ENCODE measurements at regions of chr17 and their contacts with region 1.

Region 1: DNA sequence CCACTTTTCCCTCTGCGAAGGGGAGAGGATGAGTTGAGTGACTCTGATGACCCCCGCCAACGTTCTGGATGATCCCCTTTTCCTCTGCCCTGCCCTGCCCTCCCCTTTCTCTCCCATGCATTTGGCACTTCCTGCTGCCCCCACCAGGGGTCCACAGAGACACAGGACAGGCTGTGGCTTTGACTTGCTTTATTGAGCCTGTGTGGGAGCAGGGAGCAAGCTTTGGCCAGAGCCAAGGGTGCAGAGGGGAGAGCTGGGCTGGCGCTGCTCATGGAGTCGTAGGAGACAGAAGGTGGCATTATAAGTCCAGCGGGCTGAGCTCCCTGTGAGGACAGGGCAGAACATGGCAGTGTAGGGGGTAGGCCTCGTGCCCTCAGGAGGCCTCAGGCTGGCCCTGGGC is 1.6 kb downstream of the PPY start:
- DNase-seq: no peak
- ATAC-seq: peak in 6 of 8 donors; percentile 9 to 62 (median 34)
- H3K4me3 ChIP-seq: no peak overlapping the region
- H3K27ac ChIP-seq: no peak overlapping the region
- H3K4me1 ChIP-seq: peaks cover 0 to 15% (median 6%) of the 10 kb centered on the region in 9 donors
- H3K27me3 ChIP-seq: peaks cover 0 to 28% (median 23%) of the 10 kb centered on the region in 7 donors
- CTCF ChIP-seq: peak in 7 of 9 donors; percentile 32 to 52 (median 43)

Region 2: GRCh38 chr17:43994272-43995149 is 53.9 kb after region 1 on chr17:
- intact Hi-C with region 1: loop called (anchors 1 to 10 kb)
- DNase-seq: peak; percentile 54 to 69
- ATAC-seq: peak; percentile 83 to 93 (median 86)
- H3K4me3 ChIP-seq: peak overlapping the region in 9 of 10 donors; percentile 2 to 48 (median 35)
- H3K27ac ChIP-seq: no peak overlapping the region
- H3K4me1 ChIP-seq: peaks cover 0 to 10% (median 9%) of the 10 kb centered on the region in 9 donors
- H3K27me3 ChIP-seq: peaks cover 0 to 25% (median 4%) of the 10 kb centered on the region in 7 donors
- CTCF ChIP-seq: peak; percentile 68 to 90 (median 87)

Region 3: DNA sequence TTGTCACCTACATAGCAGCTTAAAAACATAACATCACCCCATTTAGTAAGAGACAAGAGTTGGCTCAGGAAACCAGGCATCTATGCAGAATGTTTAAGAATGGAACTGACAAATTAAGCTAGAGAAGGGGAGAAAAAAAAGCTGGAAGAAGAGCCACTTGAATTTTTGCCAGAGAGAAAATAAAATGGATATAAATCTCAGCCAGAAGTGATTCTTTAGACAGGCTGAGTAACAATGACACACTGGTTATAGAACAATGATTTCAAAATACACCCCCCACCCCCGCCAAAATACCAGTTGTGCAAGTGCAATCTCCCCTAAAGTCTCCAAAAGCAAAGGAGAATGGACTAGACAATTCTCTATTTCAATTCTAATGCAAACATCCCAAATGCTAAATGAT is 103.4 kb after region 1 on chr17:
- intact Hi-C with region 1: loop called in 7 of 10 experiments (anchors 1 to 10 kb)
- DNase-seq: no peak
- ATAC-seq: no peak
- H3K4me3 ChIP-seq: no peak overlapping the region
- H3K27ac ChIP-seq: peak overlapping the region in 5 of 10 donors; percentile 46 to 71 (median 53)
- H3K4me1 ChIP-seq: peaks cover 2 to 50% (median 34%) of the 10 kb centered on the region in 9 donors
- H3K27me3 ChIP-seq: no peaks in the 10 kb centered on the region
- CTCF ChIP-seq: no peak

Region 4: GRCh38 chr17:44110823-44111633 is 170.4 kb after region 1 on chr17:
- intact Hi-C with region 1: loop called in 1 of 10 experiments (anchors 10 kb)
- DNase-seq: peak; percentile 99 to 100
- ATAC-seq: peak; percentile 79 to 90 (median 85)
- H3K4me3 ChIP-seq: peak overlapping the region; percentile 37 to 67 (median 60)
- H3K27ac ChIP-seq: peak overlapping the region; percentile 86 to 98 (median 92)
- H3K4me1 ChIP-seq: peaks cover 67 to 99% (median 96%) of the 10 kb centered on the region in 9 donors
- H3K27me3 ChIP-seq: no peaks in the 10 kb centered on the region
- CTCF ChIP-seq: no peak

Region 5: DNA sequence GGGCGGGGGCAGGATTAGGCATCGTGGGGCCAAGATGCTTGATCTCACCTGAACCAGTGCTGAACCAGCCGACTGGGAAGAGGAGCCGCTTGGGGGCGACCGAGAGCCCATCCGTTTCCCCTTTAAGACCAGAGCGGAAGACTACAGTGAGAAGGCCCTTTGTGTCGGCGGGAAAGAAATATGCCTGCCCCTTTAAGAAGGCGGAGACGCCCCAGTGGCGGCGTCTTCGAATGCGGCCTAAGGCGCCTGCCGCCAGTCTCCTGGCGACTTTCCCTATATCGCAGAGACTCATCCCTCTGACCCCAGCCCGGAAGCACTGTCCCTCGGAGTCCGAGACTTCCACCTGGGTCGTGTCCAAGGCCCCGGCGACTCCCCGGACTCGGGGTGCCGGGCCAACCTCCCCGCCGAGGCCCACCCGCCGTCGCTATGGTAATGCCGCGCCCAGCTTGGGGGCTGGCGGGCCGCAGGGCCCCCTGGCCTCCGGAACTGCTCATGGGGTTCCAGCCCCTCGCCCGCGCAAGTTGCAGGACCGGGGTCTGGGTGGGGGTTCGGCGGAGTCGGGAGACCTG is 201.2 kb after region 1 on chr17 and contains the start of gene HROB:
- intact Hi-C with region 1: loop called in 3 of 10 experiments (anchors 10 kb)
- DNase-seq: peak; percentile 95 to 98
- ATAC-seq: peak; percentile 74 to 93 (median 89)
- H3K4me3 ChIP-seq: peak within 1 kb of the TSS; percentile 56 to 89 (median 68)
- H3K27ac ChIP-seq: peak within 1 kb of the TSS in 7 of 10 donors; percentile 15 to 78 (median 55)
- H3K4me1 ChIP-seq: peaks cover 0 to 47% (median 21%) of the 10 kb centered on the region in 9 donors
- H3K27me3 ChIP-seq: peaks cover 0 to 8% (median 0%) of the 10 kb centered on the region in 7 donors
- CTCF ChIP-seq: peak; percentile 86 to 95 (median 90)
- total RNA-seq, gene HROB: 0.49 to 1.9 (median 0.74) TPM

Region 6: GRCh38 chr17:44159519-44160210 is 219.0 kb after region 1 on chr17:
- intact Hi-C with region 1: loop called in 1 of 10 experiments (anchors 10 kb)
- DNase-seq: no peak
- ATAC-seq: no peak
- H3K4me3 ChIP-seq: no peak overlapping the region
- H3K27ac ChIP-seq: no peak overlapping the region
- H3K4me1 ChIP-seq: no peaks in the 10 kb centered on the region
- H3K27me3 ChIP-seq: no peaks in the 10 kb centered on the region
- CTCF ChIP-seq: no peak

Region 7: GRCh38 chr17:44167181-44167861 is 226.7 kb after region 1 on chr17:
- intact Hi-C with region 1: loop called in 2 of 10 experiments (anchors 5 to 10 kb)
- DNase-seq: no peak
- ATAC-seq: peak in 4 of 8 donors; percentile 21 to 37 (median 32)
- H3K4me3 ChIP-seq: no peak overlapping the region
- H3K27ac ChIP-seq: peak overlapping the region in 3 of 10 donors; percentile 10 to 56 (median 15)
- H3K4me1 ChIP-seq: peaks cover 0 to 33% (median 13%) of the 10 kb centered on the region in 9 donors
- H3K27me3 ChIP-seq: no peaks in the 10 kb centered on the region
- CTCF ChIP-seq: no peak

Region 8: DNA sequence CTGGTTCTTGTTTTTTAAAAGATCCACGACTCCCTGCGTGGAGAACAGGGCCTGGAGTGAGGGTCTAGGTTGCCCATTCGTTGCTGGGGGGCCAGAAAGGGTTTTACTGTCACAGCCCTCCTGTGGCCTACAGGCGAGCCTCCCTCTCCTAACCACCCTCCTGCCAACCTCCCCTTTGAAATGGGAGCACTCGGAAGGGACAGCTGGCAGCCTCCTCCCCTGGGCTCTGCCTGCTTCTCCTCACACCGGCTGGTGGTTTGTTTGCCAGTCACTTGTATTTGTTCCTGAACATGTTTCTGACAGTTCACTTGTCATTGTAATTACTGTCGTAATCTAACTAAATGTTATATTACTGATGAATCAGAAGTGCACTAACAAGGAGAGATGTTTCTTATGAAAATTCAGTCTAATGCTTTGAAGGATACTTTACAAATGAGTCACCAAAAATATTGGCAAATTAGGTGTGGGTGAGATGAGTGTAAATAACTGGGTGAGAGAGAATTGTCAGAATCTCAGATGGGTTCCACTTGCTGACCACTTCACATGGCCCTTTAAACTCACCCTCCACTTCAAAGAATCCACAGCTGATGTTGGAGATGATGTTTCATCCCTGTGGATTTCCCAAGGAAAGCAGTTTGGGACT is 1901.4 kb after region 1 on chr17:
- intact Hi-C with region 1: no loop called
- DNase-seq: no peak
- ATAC-seq: no peak
- H3K4me3 ChIP-seq: no peak overlapping the region
- H3K27ac ChIP-seq: no peak overlapping the region
- H3K4me1 ChIP-seq: no peaks in the 10 kb centered on the region
- H3K27me3 ChIP-seq: peaks cover 0 to 37% (median 9%) of the 10 kb centered on the region in 7 donors
- CTCF ChIP-seq: no peak

Measured in heart right ventricle (tissue), 16 donors.